Aorta (tissue), 5 donors: ENCODE measurements at regions of chr10 and their contacts with region 1.

Region 1: GRCh38 chr10:117174439-117175214 is 22.7 kb upstream of the KCNK18 start:
- DNase-seq: peak; percentile 80 to 89
- ATAC-seq: peak; percentile 89
- H3K4me3 ChIP-seq: peak overlapping the region in 1 of 2 donors; percentile 9
- H3K27ac ChIP-seq: no peak overlapping the region
- H3K4me1 ChIP-seq: no peaks in the 10 kb centered on the region
- H3K27me3 ChIP-seq: no peaks in the 10 kb centered on the region

Region 2: DNA sequence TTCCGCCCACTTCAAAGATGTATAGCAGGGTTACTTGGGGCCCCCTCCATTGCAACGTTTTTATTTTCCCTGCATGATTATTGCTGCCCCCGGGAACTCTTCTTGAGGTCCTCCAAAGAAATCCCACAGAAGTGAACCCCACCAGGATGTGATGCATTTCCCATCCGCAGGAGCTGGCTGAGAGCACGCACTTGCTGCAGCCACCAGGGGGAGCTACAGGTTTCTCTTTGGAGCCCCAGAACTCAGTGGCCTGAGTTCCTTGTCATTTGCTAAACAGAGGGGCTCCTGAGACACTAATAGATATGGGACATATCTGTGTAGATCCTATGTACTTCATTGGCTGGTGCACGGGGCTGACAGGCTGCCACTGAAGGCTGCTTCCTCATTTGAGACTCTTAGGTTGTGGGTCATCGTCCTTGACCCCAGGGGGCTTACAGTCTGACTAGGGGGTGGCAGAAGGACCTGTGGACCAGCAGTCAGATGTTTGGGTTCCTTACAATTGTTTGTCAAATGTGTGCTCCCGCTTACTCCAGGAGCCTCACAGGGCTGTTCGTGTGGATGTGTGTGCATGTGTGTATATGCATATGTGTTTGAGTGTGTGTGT is 377.6 kb before region 1 on chr10:
- intact Hi-C with region 1: loop called (anchors 2 kb)
- DNase-seq: peak; percentile 79 to 90
- ATAC-seq: peak; percentile 70
- H3K4me3 ChIP-seq: no peak overlapping the region
- H3K27ac ChIP-seq: no peak overlapping the region
- H3K4me1 ChIP-seq: no peaks in the 10 kb centered on the region
- H3K27me3 ChIP-seq: no peaks in the 10 kb centered on the region